ENCODE measurements at regions of chr17 and their contacts with region 1.

Region 1: DNA sequence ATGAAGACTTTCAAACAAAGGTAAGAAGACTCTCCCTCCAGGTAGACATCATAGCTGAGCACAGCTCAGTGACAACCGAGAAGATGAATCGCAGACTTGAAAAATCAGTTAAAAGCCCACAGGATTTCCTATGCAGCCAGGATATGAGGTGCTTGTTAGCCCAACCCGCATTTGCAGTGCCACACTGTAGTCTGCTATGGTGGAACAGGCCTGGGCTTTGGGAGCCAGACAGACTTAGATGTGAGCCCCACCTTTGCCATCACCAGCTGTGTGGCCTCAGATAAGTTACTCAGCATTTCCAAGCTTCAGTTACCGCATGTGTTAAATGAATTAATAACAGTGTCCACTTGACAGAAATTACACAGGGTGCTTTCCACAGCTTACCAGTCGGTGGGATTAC is 204.4 kb upstream of the HS3ST3A1 start:
- DNase-seq: no peak
- H3K4me3 ChIP-seq: no peak overlapping the region
- H3K27ac ChIP-seq: no peak overlapping the region
- H3K4me1 ChIP-seq: no peaks in the 10 kb centered on the region
- H3K27me3 ChIP-seq: no peaks in the 10 kb centered on the region
- CTCF ChIP-seq: no peak
- EP300 ChIP-seq: no peak
- POLR2A ChIP-seq: no peak

Region 2: DNA sequence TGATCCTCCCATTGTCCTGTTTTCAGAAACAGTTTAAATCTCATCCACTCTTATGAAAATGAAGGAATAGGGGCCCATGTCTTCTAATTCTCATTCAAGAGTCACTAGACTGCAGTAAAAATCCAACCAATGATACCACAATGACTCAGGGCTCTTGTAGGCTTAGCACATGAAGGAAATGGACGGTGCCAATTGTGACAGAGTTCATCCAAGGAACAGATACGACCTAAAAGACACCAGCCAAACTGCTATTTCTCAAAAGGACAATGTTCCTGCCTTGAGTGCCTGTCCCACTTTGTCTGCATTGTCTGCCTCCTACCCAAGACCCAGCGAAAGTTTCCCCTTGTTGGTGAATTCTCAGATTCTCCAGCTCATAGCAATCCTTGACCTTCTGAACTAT is 58.5 kb after region 1 on chr17:
- in situ Hi-C with region 1: no loop called
- intact Hi-C with region 1: loop called (anchors 2 kb)
- DNase-seq: no peak
- H3K4me3 ChIP-seq: no peak overlapping the region
- H3K27ac ChIP-seq: no peak overlapping the region
- H3K4me1 ChIP-seq: no peaks in the 10 kb centered on the region
- H3K27me3 ChIP-seq: no peaks in the 10 kb centered on the region
- CTCF ChIP-seq: no peak
- EP300 ChIP-seq: no peak
- POLR2A ChIP-seq: no peak